ENCODE measurements at regions of chr19 and their contacts with region 1.

Region 1: DNA sequence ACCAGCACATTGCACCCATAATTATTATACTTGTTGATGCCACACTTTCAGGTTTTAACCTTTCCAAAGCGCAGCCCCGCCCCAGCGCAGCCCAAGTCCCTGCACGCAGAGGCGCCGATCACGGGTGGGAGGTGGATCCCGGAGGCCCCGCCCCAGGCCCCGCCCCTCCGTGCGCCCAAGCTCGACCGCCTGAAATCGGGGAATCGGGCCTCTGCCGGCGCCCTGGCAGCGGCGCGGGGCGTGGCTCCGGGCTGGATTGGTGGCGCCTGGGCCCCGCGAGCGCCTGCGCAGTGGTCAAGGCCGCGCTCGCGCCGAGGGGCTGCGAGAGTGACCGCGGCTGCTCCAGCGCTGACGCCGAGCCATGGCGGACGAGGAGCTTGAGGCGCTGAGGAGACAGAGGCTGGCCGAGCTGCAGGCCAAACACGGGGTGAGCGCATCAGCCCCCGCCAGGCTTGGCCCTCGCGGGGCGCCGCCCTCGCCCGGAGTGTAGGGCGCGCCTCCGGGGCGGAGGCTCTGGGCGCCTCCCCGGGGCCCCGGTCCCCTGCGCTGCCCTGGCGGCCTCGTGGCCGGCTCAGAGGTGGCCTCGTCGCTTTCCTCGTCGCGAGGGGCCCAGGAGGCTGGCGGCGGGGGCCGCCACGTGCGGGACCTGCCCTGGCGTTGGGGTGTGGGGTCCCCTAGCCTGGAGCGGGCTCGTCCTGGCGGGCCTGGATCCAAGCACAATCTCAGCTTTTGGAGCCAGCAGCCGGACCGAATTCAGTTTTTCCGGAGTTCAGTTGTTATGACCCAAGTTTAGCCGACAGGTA is at the start of gene PDCD5:
- DNase-seq: peak; percentile 99
- ATAC-seq: peak; percentile 90
- H3K4me3 Mint-ChIP-seq: peak within 1 kb of the TSS; percentile 92
- H3K27ac Mint-ChIP-seq: peak within 1 kb of the TSS; percentile 91
- H3K4me1 Mint-ChIP-seq: peaks cover 33% of the 10 kb centered on the region
- H3K27me3 Mint-ChIP-seq: peaks cover under 1% of the 10 kb centered on the region
- total RNA-seq, gene PDCD5: 268 to 272 TPM

Region 2: DNA sequence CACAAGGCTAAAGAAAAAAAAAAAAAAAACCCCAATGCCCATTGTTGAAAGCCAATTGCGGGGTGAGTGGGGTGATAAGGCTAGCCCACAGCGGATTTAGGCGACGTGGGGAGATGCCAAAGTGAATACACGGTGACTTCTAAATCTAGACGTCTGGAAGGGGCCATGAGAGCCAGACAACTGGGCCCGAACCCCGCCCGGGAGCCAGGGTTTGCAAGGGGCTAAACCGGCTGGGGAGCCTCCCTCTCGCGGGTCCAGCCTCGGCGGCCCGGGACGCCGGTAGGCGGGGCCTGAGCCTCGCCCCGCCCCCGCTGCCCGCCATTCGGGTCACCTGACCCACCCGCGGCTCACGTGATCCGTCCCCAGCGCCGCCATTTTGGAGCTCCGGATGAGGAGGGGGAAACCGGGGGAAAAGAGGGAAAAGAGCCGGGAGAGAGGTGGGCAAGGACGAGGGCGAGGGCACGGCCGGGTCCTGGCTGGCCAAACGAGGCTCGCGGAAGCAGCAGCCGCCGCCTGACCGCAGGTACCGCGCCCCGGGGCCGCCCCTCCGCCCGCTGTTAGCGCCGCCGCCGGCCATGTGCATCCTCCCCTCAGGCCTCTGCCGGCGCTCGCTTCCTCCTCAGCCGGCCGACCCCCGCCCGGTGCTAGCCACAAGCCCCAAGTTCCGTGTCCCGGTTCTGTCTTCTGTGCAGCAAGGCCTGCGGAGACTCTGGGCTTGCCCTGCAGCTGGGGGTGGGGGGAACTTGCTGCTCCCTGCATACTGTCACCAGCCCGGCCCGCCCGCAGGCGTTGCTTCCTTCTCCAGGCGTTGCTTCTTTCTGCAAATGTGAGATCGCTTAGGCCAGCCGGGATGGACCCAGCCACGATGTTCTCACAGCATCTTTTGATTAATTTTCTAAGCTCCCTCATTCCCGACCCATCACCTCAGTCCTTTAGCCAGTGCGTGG is 235.6 kb before region 1 on chr19 and contains the start of gene ZNF507:
- CTCF ChIA-PET with region 1: no interaction called
- POLR2A ChIA-PET with region 1: no interaction called
- intact Hi-C with region 1: loop called in 1 of 2 experiments (anchors 1 kb)
- DNase-seq: peak; percentile 93
- ATAC-seq: peak; percentile 82
- H3K4me3 Mint-ChIP-seq: peak within 1 kb of the TSS; percentile 92
- H3K27ac Mint-ChIP-seq: peak within 1 kb of the TSS; percentile 95
- H3K4me1 Mint-ChIP-seq: peaks cover 42% of the 10 kb centered on the region
- H3K27me3 Mint-ChIP-seq: peaks cover 2% of the 10 kb centered on the region
- total RNA-seq, gene ZNF507: 25.2 to 27.6 TPM

Region 3: DNA sequence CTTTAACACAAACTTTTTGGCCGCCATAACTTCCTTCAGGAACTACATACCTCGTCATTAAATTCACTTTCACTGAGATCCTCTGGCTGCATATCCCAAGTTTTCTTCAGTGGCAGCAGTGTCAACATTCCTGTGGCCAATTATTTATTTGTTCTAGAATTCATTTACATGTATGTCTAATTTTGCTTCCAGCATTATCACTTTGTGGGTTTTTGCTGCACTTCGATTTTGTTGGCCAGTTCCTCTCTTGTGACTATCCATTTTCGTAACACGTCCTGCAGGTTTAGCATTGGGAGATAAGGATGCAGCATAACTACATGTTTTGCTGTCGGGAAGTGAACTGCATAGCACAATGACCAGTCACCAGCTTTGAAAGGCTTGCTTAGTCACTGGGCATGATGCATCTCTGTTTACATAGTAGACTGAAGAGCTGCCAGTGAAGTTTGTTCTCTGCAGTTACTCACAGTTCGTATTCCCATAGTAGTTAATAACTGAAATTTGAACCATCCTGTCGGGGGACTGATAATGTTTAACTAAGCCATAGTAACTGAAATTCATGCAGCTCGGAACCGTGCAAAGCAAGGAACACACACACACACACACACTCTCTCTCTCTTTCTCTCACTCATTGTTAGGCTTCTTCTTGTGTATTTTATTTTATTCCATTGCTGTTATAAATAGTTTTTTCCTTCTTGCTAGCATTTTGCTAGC is 207.4 kb before region 1 on chr19:
- CTCF ChIA-PET with region 1: no interaction called
- POLR2A ChIA-PET with region 1: no interaction called
- intact Hi-C with region 1: no loop called
- DNase-seq: no peak
- ATAC-seq: no peak
- H3K4me3 Mint-ChIP-seq: no peak overlapping the region
- H3K27ac Mint-ChIP-seq: no peak overlapping the region
- H3K4me1 Mint-ChIP-seq: no peaks in the 10 kb centered on the region
- H3K27me3 Mint-ChIP-seq: no peaks in the 10 kb centered on the region

Region 4: DNA sequence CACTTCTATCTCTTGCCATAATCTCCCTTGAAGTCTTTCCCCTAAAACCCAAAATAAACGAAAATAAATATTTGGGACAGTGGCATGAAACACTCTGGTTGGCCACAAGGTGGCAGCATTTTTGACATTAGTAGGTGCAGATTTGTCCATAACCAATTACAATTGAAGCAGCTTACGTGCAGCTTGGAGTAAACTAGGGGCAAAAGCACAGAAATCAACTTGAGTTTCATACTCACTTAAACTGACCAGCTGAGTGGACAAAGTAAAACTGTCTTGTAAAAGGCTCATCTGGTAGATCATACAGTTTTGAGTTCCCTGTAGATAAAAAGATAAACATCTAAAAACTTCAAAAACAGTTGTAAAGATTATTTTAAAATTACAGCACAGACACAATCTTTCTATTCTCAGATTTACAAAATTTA is 18.6 kb after region 1 on chr19:
- CTCF ChIA-PET with region 1: interaction called, 23 read pairs
- POLR2A ChIA-PET with region 1: interaction called, 3 read pairs
- intact Hi-C with region 1: no loop called
- DNase-seq: peak; percentile 62
- ATAC-seq: peak; percentile 66
- H3K4me3 Mint-ChIP-seq: no peak overlapping the region
- H3K27ac Mint-ChIP-seq: no peak overlapping the region
- H3K4me1 Mint-ChIP-seq: peaks cover 7% of the 10 kb centered on the region
- H3K27me3 Mint-ChIP-seq: no peaks in the 10 kb centered on the region

Region 5: GRCh38 chr19:33080761-33081681 is 499.9 kb after region 1 on chr19 and contains the start of gene GPATCH1:
- CTCF ChIA-PET with region 1: no interaction called
- POLR2A ChIA-PET with region 1: no interaction called
- intact Hi-C with region 1: loop called in 1 of 2 experiments (anchors 2 kb)
- DNase-seq: peak; percentile 93
- ATAC-seq: peak; percentile 94
- H3K4me3 Mint-ChIP-seq: peak within 1 kb of the TSS; percentile 99
- H3K27ac Mint-ChIP-seq: peak within 1 kb of the TSS; percentile 97
- H3K4me1 Mint-ChIP-seq: peaks cover 16% of the 10 kb centered on the region
- H3K27me3 Mint-ChIP-seq: no peaks in the 10 kb centered on the region
- total RNA-seq, gene GPATCH1: 9.5 to 11.1 TPM

Region 6: DNA sequence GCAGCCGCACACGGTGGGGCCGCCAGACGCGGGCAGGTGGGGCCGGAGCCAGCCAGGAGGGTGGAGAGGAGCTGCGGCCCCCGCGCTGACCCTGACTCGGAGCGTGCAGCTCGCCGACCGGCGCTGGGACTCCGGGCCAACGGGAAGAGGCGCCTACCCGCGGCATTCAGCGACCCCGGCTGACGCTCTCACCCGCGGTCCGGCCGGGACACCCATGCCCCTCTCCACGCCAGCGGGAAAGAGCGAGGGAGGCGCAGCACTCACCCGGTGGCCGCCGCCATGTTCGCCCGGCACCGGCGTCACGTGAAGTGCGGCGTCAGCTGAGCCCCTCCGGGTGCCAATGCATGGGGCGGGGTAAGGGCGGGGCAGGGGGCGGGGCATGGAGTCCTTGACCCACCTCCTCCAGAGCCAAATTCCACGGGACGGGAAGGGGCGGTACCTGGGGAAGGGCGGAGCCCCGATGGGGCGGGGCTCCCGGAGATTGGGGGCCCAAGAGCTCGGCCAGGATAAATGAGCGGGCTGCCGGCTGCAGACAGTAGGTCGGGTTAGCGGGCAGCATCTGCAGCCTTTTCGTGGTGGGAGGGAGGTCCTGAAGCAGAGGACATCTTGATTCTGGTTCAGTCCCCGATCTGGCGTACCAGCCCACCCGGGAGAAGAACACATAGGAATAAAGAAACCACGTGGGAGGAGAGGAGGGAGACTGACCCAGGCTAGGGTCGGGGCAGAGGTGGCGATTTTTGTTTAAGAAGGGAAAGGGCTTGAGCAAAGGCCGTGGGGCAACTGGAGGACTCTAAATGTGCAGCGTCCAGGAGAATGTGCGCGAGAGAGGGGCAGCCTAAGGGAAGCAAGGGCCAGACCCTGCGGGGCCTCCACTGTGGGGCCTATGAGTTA is 940.6 kb after region 1 on chr19 and contains the start of gene PEPD:
- CTCF ChIA-PET with region 1: no interaction called
- POLR2A ChIA-PET with region 1: no interaction called
- intact Hi-C with region 1: loop called in 1 of 2 experiments (anchors 1 kb)
- DNase-seq: peak; percentile 95
- ATAC-seq: peak; percentile 97
- H3K4me3 Mint-ChIP-seq: peak within 1 kb of the TSS; percentile 89
- H3K27ac Mint-ChIP-seq: peak within 1 kb of the TSS; percentile 60
- H3K4me1 Mint-ChIP-seq: peaks cover 20% of the 10 kb centered on the region
- H3K27me3 Mint-ChIP-seq: no peaks in the 10 kb centered on the region
- total RNA-seq, gene PEPD: 26.9 to 37.4 TPM